KBM-7 (cell line): ENCODE measurements at regions of chr5 and their contacts with region 1.

Region 1: GRCh38 chr5:149442563-149443182 is 63.6 kb upstream of the IL17B start:
- DNase-seq: peak; percentile 74

Region 2: DNA sequence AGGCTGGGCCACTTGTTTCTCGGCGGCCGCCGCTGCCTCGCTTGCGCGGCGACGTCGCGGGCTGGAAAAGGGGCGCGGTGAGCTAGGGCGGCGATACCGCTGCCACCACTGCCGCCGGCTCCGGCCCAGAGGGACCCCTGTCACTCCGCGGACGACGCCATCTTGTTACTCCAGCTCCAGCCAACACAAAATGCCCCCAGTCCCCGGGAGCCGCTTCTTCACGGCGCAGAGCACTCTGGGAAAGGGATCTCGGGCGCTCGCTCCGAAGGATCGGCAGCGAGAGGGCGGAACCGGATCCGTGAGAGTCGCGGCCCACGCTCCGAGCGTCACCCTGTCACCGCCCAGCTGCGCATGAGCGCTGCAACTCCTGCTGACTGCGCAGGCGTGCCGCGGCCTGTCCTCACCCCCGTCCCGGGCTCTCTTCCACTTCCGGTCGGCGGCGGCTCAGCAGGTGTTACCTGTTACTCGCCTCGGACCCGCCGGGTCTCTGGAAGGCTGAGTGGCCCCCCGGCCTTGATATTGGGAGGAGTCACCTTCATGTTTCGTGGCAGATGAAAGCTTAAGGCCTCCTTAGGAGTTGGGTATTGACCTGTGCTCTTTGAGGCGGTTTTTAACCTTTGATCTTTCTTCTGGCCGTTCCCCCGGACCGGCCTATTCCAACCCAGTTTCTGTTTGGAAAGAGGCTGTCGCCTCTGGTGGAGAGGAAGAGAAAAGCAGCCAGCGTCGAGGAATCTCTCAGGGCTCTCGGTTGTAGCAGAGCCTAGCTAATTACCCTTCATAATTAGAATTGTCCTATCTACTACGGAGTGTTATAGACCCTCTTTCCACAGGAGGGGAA is 108.7 kb after region 1 on chr5 and contains the start of gene CSNK1A1:
- in situ Hi-C with region 1: loop called (anchors 10 kb)
- DNase-seq: peak; percentile 99